ENCODE measurements at regions of chr3 and their contacts with region 1.

Region 1: GRCh38 chr3:140344082-140344454 is 333.8 kb upstream of the TRIM42 start:
- DNase-seq: no peak
- H3K4me3 ChIP-seq: no peak overlapping the region
- H3K27ac ChIP-seq: no peak overlapping the region
- H3K4me1 ChIP-seq: peaks cover 10% of the 10 kb centered on the region; the same call in 1 of the 2 replicates
- H3K27me3 ChIP-seq: no peaks in the 10 kb centered on the region
- CTCF ChIP-seq: no peak

Region 2: DNA sequence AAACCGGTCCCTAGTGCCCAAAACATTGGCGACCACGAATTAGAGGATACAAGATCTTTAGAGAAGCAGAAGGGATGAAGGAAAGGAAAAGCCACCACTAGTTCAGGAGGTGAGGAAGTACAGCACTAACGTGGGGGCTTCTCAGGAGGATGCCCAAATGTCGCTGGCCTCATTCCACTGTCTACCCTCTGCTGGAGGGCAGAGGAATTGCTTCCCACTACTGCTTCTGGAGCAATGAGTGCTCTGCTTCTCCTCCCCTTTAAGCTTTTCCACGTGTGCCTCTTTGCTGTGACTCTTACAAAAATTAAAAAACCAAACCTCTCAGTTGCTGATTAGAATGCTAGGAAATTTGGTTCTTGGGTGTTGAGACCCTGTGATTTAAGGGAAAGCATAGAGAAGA is 127.8 kb before region 1 on chr3:
- CTCF ChIA-PET with region 1: no interaction called
- POLR2A ChIA-PET with region 1: interaction called, 15 read pairs
- intact Hi-C with region 1: no loop called
- DNase-seq: no peak
- H3K4me3 ChIP-seq: no peak overlapping the region
- H3K27ac ChIP-seq: no peak overlapping the region
- H3K4me1 ChIP-seq: 0 out of 2 replicates have a peak, but pooled peaks cover 5% of the 10 kb centered on the region
- H3K27me3 ChIP-seq: no peaks in the 10 kb centered on the region
- CTCF ChIP-seq: peak; percentile 60

Region 3: DNA sequence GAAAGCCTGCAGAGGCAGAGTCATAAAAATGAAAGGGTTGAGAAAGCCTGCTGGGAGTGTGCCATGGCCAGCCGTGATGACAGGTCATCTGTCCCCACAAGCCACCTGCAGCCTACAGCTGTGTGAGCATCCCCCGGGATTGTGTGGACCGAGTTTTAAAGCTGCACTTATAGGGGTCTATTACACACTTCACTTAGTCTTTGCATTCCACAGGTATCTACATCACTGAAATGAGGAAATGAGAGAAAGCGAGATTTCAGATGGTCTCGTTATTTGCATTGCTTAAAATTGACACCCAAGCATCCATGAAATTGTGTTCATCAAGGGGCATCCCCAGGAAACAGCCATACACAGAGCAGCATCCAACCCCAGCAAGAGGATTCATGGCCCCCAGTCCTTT is 196.2 kb after region 1 on chr3:
- CTCF ChIA-PET with region 1: interaction called, 10 read pairs
- POLR2A ChIA-PET with region 1: no interaction called
- intact Hi-C with region 1: no loop called
- DNase-seq: no peak
- H3K4me3 ChIP-seq: no peak overlapping the region
- H3K27ac ChIP-seq: no peak overlapping the region
- H3K4me1 ChIP-seq: peaks cover 13% of the 10 kb centered on the region
- H3K27me3 ChIP-seq: no peaks in the 10 kb centered on the region
- CTCF ChIP-seq: no peak